Pancreas (tissue), 10 donors: ENCODE measurements at regions of chr6 and their contacts with region 1.

Region 1: DNA sequence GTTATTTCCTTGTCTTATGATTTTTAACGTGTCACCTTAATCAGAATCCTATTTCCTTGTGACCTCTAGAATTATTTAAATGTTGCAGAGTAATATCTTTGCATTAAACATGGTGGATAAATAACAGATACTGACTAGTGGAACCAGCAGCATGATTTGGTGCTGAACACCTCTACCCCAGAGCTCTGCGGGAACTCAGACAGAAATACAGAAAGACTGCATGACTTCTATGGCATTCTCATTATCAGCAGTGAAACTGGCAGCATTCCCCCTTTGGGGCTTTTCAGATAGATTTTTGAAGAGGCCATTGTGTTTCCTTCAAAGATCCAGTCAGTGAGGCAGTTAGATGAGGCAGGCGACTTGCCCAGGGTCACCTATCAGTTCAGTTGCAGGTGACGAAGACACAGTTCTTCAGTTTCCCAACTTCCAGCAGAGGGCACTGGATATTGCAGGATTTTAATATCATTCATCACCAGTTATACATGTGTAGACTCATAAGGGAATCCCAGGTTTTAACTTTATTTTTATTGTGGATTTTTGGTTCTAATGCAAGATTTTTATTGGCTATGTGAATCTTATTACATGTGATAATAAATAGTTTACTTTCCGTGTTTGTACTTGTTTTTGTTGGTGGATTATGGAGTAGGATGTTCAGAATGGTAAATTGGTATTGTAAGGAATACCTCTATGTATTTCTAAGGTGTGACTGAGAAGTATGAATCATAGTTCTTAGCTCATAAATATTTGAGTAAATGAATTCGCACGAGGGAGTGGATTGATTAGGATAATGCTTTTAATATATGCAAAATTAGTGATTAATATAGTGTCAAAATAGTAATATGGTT is 81.3 kb downstream of the AFDN start:
- DNase-seq: peak in 1 of 6 donors; percentile 31
- ATAC-seq: peak; percentile 60 to 89 (median 82)
- H3K4me3 ChIP-seq: no peak overlapping the region
- H3K27ac ChIP-seq: no peak overlapping the region
- H3K4me1 ChIP-seq: peaks cover 6 to 15% (median 11%) of the 10 kb centered on the region in 3 donors
- H3K27me3 ChIP-seq: no peaks in the 10 kb centered on the region
- CTCF ChIP-seq: peak in 2 of 4 donors; percentile 18 to 35

Region 2: GRCh38 chr6:167501781-167502385 is 406.2 kb before region 1 on chr6:
- intact Hi-C with region 1: loop called in 2 of 3 experiments (anchors 5 to 10 kb)
- DNase-seq: peak; percentile 50 to 82 (median 70)
- ATAC-seq: peak; percentile 93 to 99 (median 96)
- H3K4me3 ChIP-seq: no peak overlapping the region
- H3K27ac ChIP-seq: no peak overlapping the region
- H3K4me1 ChIP-seq: no peaks in the 10 kb centered on the region
- H3K27me3 ChIP-seq: no peaks in the 10 kb centered on the region
- CTCF ChIP-seq: peak; percentile 9 to 51 (median 36)

Region 3: DNA sequence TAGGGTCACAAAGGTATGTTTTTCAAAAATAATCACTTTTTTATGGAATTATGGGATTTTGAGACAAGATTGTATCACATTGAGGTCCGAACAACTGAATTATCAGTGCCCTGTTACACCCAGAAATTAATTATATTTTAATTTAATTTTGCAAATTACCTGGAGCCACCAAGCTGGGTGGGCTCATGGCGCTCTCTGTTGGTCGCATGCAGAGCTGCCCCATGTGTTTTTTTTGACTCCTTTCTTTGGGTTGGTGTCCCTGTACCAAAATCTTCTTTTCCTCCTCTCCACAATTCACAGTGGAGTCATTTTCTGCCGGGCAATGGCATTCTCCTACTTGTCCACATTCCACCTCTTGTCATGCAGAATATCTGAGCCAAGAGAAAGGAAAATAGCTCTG is 209.9 kb after region 1 on chr6:
- intact Hi-C with region 1: loop called in 1 of 3 experiments (anchors 5 kb)
- DNase-seq: peak in 1 of 6 donors; percentile 4
- ATAC-seq: peak in 1 of 4 donors; percentile 54
- H3K4me3 ChIP-seq: no peak overlapping the region
- H3K27ac ChIP-seq: no peak overlapping the region
- H3K4me1 ChIP-seq: no peaks in the 10 kb centered on the region
- H3K27me3 ChIP-seq: no peaks in the 10 kb centered on the region
- CTCF ChIP-seq: peak in 1 of 4 donors; percentile 18